Heart left ventricle (tissue), 16 donors: ENCODE measurements at regions of chr12 and their contacts with region 1.

Region 1: DNA sequence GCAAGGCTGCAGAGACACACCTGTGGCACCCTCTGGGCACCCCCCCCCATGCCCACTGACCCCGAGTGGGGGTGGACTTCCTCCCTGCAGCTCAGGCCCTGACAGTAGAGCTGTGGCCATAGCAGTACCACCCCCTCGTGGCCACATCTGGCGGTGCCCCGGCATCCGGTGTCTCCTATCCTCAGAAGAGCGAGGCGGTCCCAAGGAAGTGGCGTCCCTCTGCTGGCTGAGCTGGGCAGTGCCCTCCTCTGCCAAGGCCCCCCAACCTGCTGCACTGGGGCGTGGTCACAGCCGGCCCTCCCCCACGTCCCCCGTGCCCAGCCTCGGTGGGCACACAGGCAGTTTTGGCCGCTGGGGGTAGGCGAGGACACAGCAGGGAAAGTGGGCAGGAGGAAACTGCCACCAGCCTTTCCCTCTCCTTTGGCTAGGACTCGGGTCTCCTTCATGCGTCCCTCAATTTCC is 6.0 kb upstream of the SLC6A12 start:
- DNase-seq: peak; percentile 40 to 80 (median 59)
- ATAC-seq: peak; percentile 51 to 78 (median 68)
- H3K4me3 ChIP-seq: no peak overlapping the region
- H3K27ac ChIP-seq: no peak overlapping the region
- H3K4me1 ChIP-seq: peaks cover 0 to 6% (median 0%) of the 10 kb centered on the region in 12 donors
- H3K27me3 ChIP-seq: peaks cover 0 to 6% (median 0%) of the 10 kb centered on the region in 9 donors
- CTCF ChIP-seq: peak; percentile 18 to 73 (median 52)
- POLR2A ChIP-seq: no peak

Region 2: GRCh38 chr12:321607-322326 is 101.8 kb after region 1 on chr12:
- intact Hi-C with region 1: loop called in 1 of 10 experiments (anchors 5 kb)
- DNase-seq: no peak
- ATAC-seq: no peak
- H3K4me3 ChIP-seq: no peak overlapping the region
- H3K27ac ChIP-seq: no peak overlapping the region
- H3K4me1 ChIP-seq: no peaks in the 10 kb centered on the region
- H3K27me3 ChIP-seq: no peaks in the 10 kb centered on the region
- CTCF ChIP-seq: peak in 6 of 12 donors; percentile 3 to 28 (median 16)
- POLR2A ChIP-seq: no peak